H1 (cell line): ENCODE measurements at regions of chr18 and their contacts with region 1.

Region 1: DNA sequence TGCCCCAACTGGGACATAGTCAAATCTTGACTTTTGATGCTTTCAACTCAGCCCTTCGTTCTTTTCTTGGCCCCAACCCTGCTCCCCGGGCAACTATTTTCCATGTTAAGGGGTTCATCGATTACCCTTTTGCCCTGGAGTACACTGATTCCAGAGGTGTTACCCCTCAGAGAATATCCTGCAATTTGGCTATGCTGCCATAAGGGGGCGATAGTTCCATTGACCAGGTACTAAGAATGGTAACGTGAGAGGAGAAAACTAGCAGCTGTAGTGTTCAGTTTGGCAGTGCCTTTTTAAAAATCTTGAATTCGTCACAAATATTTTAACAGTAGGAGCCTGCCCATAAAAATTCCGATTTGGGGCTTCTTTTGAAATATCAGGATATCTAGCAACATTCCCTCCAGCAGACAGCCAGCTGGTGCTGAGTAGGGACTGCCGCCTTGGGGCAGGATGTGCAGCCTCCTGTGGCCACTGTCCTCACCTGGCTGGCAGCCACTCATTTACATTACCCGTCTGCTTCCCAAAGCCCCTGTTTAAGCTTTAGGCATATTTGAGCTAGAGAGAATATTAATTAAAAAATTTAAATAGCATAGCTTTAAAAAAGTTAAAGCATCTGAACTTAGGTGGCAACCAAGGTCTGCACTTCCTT is 146.3 kb upstream of the SKOR2 start:
- DNase-seq: peak in 1 of 2 experiments; percentile 84
- H3K4me3 ChIP-seq: no peak overlapping the region
- H3K27ac ChIP-seq: no peak overlapping the region
- H3K4me1 ChIP-seq: no peaks in the 10 kb centered on the region
- H3K27me3 ChIP-seq: no peaks in the 10 kb centered on the region; a peak in 1 of 7 replicates
- CTCF ChIP-seq: peak in 2 of 3 experiments; percentile 73 to 75; a peak in 3 of 4 replicates
- EP300 ChIP-seq: no peak
- POLR2A ChIP-seq: no peak
- RAD21 ChIP-seq: peak; percentile 65 to 77

Region 2: GRCh38 chr18:47381975-47382570 is 15.7 kb before region 1 on chr18:
- CTCF ChIA-PET with region 1: interaction called, 16 read pairs
- POLR2A ChIA-PET with region 1: no interaction called
- DNase-seq: no peak
- H3K4me3 ChIP-seq: no peak overlapping the region
- H3K27ac ChIP-seq: no peak overlapping the region
- H3K4me1 ChIP-seq: no peaks in the 10 kb centered on the region
- H3K27me3 ChIP-seq: no peaks in the 10 kb centered on the region
- CTCF ChIP-seq: no peak
- EP300 ChIP-seq: no peak
- POLR2A ChIP-seq: no peak
- RAD21 ChIP-seq: no peak

Region 3: GRCh38 chr18:47413327-47413726 is 15.5 kb after region 1 on chr18:
- CTCF ChIA-PET with region 1: interaction called, 40 read pairs
- POLR2A ChIA-PET with region 1: no interaction called
- DNase-seq: no peak
- H3K4me3 ChIP-seq: no peak overlapping the region
- H3K27ac ChIP-seq: no peak overlapping the region
- H3K4me1 ChIP-seq: peaks cover 0 to 5% (median 2%) of the 10 kb centered on the region in 4 experiments; a peak in 2 of 7 replicates
- H3K27me3 ChIP-seq: peaks cover 0 to 13% (median 10%) of the 10 kb centered on the region in 4 experiments; a peak in 4 of 7 replicates
- CTCF ChIP-seq: no peak
- EP300 ChIP-seq: no peak
- POLR2A ChIP-seq: no peak
- RAD21 ChIP-seq: no peak

Region 4: DNA sequence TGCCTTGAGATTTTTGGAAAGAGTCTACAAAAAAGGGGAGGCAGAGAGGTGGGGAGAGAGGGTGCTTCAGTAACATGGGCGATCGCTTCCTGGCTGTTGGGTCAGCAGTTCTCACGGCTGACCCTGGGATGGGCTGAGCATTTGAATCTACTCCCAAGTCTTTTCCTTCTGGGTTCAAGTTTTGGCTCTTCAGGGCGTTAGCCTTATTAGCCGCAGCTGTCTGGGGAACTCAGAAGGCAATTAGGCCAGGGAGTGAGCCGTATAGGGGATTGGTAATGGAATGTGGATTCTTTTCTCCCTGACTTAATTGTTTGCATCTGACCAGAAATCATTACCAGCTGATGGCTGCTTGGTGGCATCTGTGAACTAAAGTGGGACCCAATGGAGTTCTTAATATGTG is 104.2 kb after region 1 on chr18:
- CTCF ChIA-PET with region 1: interaction called, 11 read pairs
- POLR2A ChIA-PET with region 1: no interaction called
- DNase-seq: no peak
- H3K4me3 ChIP-seq: no peak overlapping the region
- H3K27ac ChIP-seq: no peak overlapping the region
- H3K4me1 ChIP-seq: no peaks in the 10 kb centered on the region
- H3K27me3 ChIP-seq: no peaks in the 10 kb centered on the region
- CTCF ChIP-seq: no peak
- EP300 ChIP-seq: no peak
- POLR2A ChIP-seq: no peak
- RAD21 ChIP-seq: no peak